Sigmoid colon (tissue), 7 donors: ENCODE measurements at regions of chr5 and their contacts with region 1.

Region 1: GRCh38 chr5:172479044-172479783 is 24.9 kb upstream of the SH3PXD2B start:
- DNase-seq: peak; percentile 94
- H3K4me3 ChIP-seq: no peak overlapping the region
- H3K27ac ChIP-seq: peak overlapping the region in 3 of 4 donors; percentile 39 to 58 (median 40)
- H3K4me1 ChIP-seq: peaks cover 0 to 15% (median 8%) of the 10 kb centered on the region in 4 donors
- H3K27me3 ChIP-seq: no peaks in the 10 kb centered on the region
- CTCF ChIP-seq: peak; percentile 90 to 99 (median 98)
- EP300 ChIP-seq: no peak
- POLR2A ChIP-seq: no peak

Region 2: DNA sequence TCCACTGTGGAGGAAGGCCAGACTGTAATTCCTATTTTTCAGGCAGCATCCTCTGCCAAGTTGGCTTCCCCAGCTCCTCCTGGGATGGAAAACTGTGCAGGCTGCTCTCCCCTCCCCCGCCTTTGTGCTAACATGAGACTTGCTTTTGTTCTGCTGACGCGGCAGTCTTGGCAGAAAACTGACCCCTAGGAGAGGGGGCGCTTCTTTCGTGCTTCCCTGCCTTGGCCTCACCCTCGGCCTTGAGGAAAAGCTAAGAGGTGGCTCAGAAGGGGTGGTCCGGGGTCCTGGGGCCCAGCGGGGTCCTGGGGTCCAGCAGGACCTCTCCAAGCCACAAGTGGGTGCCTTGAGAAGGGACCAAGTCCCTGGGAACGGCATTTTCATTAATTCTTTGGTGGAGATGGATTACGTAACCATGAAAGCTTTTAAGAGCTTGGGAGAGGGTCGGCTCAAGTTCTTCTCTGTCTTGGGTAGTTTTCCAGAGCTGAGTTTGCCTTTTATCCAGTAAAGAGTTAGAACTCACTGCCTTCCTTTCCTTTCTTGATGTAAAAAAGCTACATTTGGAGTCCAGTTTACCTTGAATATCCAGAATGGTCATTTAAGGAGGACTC is 75.9 kb before region 1 on chr5:
- intact Hi-C with region 1: no loop called
- DNase-seq: peak; percentile 97
- H3K4me3 ChIP-seq: peak overlapping the region in 2 of 4 donors; percentile 2 to 7
- H3K27ac ChIP-seq: peak overlapping the region; percentile 81 to 96 (median 92)
- H3K4me1 ChIP-seq: peaks cover 0 to 57% (median 49%) of the 10 kb centered on the region in 4 donors
- H3K27me3 ChIP-seq: no peaks in the 10 kb centered on the region
- CTCF ChIP-seq: no peak
- EP300 ChIP-seq: peak in 2 of 4 donors; percentile 60 to 94
- POLR2A ChIP-seq: no peak

Region 3: GRCh38 chr5:172509405-172509781 is 30.2 kb after region 1 on chr5:
- intact Hi-C with region 1: no loop called
- DNase-seq: no peak
- H3K4me3 ChIP-seq: no peak overlapping the region
- H3K27ac ChIP-seq: peak overlapping the region in 1 of 4 donors; percentile 23
- H3K4me1 ChIP-seq: peaks cover 0 to 9% (median 2%) of the 10 kb centered on the region in 4 donors
- H3K27me3 ChIP-seq: no peaks in the 10 kb centered on the region
- CTCF ChIP-seq: no peak
- EP300 ChIP-seq: no peak
- POLR2A ChIP-seq: no peak

Region 4: DNA sequence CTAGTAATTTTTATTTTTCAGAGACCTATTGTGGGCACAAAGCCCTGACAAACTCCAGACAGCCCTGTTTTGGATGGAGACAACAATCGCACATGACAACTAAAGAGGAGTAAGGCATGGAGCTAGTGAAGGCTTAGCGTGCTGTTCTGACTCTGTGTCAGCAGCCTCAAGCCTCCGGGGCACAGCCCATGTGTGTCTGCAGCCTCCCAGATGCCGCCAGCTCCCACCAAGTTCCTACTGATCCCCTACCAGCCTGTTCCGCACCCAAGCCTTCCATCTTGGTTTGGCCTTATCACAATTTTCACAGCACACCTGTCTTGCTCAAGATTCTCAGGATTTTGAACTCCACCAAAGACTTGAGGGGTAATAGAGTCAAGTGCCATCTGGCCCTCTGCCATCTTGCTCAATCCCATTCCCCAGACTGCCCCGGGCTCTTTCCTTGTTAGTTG is 45.4 kb after region 1 on chr5:
- intact Hi-C with region 1: loop called (anchors 5 kb)
- DNase-seq: peak; percentile 93
- H3K4me3 ChIP-seq: no peak overlapping the region
- H3K27ac ChIP-seq: peak overlapping the region; percentile 51 to 84 (median 78)
- H3K4me1 ChIP-seq: peaks cover 0 to 60% (median 37%) of the 10 kb centered on the region in 4 donors
- H3K27me3 ChIP-seq: no peaks in the 10 kb centered on the region
- CTCF ChIP-seq: no peak
- EP300 ChIP-seq: peak; percentile 67 to 87 (median 81)
- POLR2A ChIP-seq: no peak

Region 5: DNA sequence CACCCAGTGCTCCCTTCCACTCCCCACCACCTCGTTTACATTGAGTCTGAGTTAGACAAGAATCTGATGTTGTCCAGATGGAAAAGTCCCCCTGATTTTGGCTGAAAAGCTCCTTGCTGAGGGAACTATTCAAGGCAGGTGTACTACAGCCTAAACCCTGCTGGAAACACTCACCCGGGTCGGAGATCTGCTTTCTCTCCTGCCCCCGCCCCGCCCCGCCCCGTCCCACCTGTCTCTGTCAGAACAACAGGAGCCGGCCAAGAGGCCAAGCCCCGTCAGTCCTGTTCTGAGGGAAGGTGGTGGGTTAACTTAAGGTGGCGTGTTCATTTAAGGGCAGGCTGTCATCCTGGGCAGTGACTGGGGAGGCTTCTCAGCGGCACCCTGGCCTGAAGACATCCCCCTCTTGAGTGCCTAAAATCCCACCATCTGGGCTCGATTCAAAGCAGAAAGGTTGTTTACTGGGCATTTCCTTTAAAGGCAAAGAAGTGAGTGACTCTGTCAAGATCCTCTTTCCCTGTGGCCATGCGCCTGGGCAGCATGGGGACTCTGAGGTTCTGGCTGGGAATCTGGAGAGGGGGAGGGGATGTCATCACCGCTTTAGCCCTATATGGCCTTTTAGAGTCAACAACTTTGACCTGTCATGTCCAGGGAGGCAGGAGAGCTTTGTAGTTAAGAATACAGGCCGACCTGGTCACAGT is 90.8 kb after region 1 on chr5:
- intact Hi-C with region 1: loop called (anchors 5 kb)
- DNase-seq: no peak
- H3K4me3 ChIP-seq: no peak overlapping the region
- H3K27ac ChIP-seq: peak overlapping the region; percentile 27 to 90 (median 64)
- H3K4me1 ChIP-seq: peaks cover 0 to 41% (median 28%) of the 10 kb centered on the region in 4 donors
- H3K27me3 ChIP-seq: no peaks in the 10 kb centered on the region
- CTCF ChIP-seq: no peak
- EP300 ChIP-seq: no peak
- POLR2A ChIP-seq: no peak

Region 6: GRCh38 chr5:172640822-172641358 is 161.7 kb after region 1 on chr5 and contains the start of gene NEURL1B:
- intact Hi-C with region 1: loop called (anchors 2 kb)
- DNase-seq: peak; percentile 93
- H3K4me3 ChIP-seq: peak within 1 kb of the TSS; percentile 79 to 99 (median 99)
- H3K27ac ChIP-seq: peak within 1 kb of the TSS; percentile 94 to 99 (median 96)
- H3K4me1 ChIP-seq: peaks cover 0 to 52% (median 43%) of the 10 kb centered on the region in 4 donors
- H3K27me3 ChIP-seq: no peaks in the 10 kb centered on the region
- CTCF ChIP-seq: no peak
- EP300 ChIP-seq: no peak
- POLR2A ChIP-seq: peak in 1 of 2 donors; percentile 24
- total RNA-seq, gene NEURL1B: 32.9 to 53.2 (median 45.6) TPM

Region 7: GRCh38 chr5:172697123-172698121 is 218.2 kb after region 1 on chr5:
- intact Hi-C with region 1: loop called (anchors 1 kb)
- DNase-seq: peak; percentile 95
- H3K4me3 ChIP-seq: peak overlapping the region; percentile 48 to 68 (median 64)
- H3K27ac ChIP-seq: peak overlapping the region; percentile 74 to 91 (median 85)
- H3K4me1 ChIP-seq: peaks cover 0 to 64% (median 61%) of the 10 kb centered on the region in 4 donors
- H3K27me3 ChIP-seq: no peaks in the 10 kb centered on the region
- CTCF ChIP-seq: peak; percentile 94 to 97 (median 94)
- EP300 ChIP-seq: no peak
- POLR2A ChIP-seq: peak in 1 of 2 donors; percentile 32

Region 8: DNA sequence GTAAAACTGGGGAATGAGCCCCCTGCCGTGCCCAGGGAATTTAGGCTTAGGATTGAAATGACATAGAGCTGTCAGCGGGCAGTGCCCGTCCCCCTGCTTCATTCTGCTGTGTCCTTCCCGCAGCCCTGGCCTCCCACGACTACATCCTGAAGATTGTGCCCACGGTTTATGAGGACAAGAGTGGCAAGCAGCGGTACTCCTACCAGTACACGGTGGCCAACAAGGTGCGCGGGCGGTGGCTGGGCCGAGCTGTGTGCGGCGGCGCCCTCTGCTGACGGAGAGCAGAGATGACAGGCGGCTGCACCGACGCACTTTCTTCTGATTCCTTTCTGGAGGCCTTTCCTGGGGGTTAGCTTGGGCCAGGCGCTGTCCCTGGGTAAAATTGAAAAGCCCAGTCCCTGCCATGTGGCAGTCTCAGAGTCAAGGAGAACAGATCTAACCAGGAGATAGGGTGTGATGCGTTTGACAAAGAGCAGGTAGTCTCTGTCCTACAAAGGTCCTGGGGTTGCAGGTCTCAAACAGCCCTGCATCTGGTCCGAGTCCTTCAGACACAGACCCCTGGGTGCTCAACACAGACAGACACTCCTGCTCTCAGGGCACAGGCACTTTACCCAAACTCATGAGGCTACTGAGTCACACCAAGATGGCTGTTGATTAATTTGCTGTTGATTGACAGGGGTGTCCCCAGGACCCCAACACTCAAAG is 453.3 kb after region 1 on chr5:
- intact Hi-C with region 1: loop called (anchors 5 kb)
- DNase-seq: peak; percentile 91
- H3K4me3 ChIP-seq: no peak overlapping the region
- H3K27ac ChIP-seq: peak overlapping the region; percentile 47 to 78 (median 61)
- H3K4me1 ChIP-seq: peaks cover 0 to 21% (median 16%) of the 10 kb centered on the region in 4 donors
- H3K27me3 ChIP-seq: no peaks in the 10 kb centered on the region
- CTCF ChIP-seq: peak; percentile 90 to 99 (median 94)
- EP300 ChIP-seq: no peak
- POLR2A ChIP-seq: no peak